Right ventricle myocardium inferior (tissue), 1 donor: ENCODE measurements at regions of chr11 and their contacts with region 1.

Region 1: DNA sequence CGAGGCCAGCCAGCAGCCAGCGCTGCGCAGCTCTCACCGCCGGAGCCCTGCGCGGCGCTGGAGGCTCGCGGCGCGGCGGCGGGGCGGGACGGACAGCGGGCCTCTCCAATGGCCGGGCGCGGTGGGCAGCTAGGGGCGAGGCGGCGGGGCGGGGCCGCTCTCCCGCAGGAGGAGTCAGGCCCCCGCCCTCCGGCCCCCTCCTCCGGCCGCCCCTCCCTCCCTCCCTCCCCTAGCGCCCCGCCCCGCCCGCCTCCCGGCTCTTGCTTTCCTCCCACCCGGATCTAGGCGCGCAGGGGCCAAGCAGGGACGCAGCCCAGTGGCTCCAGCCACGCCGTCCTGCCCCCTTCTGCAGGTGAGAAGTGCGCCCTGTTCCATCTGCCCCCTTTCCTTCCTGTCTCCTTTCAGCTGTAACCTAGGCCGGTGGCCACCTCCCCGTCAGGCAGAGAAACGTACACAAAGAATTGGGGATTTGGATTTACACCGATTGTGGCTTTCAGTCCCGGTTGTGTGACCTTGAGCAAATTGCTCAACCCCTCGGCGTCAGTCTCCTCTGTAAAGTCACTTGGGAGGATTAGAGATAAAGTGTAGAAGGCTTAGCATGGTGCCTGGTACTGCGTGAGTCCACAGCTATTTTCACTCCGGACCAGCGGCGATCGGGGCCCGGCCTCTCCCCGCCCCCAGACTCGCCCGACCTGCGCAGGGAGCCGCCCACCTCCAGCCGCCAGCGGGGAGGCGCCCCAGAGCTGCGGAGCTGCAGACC is at the start of gene FZD4:
- DNase-seq: peak; percentile 92
- ATAC-seq: peak; percentile 93
- total RNA-seq, gene FZD4: 31.3 TPM

Region 2: DNA sequence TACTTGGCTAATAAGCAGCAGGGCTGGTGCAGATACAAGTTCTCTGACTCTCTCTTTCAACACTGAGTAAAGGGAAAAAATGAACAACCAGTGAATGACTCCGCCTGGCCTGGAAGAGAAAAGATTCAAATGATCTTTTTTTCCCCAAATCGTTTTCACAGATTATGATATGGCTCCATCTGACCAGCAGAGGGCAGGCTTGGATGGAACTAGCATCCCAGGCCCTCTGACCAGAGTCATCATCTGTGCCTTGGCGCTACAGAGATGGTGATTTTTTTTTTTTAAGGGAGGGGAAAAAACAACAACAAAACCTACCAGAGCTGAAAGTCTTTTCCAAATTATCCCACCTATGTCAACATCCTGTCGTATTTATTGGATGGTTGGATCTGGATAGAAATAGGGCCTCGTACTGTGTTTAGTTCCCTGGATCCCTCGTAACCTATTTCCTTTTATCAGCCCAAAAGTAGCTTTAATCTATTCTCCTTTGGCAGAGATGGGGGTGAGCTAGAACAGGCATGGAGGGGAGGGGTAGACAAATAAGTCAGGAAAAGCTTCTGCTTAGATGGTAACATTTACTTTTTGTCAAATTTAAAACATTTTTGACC is 85.5 kb before region 1 on chr11:
- intact Hi-C with region 1: no loop called
- DNase-seq: no peak
- ATAC-seq: peak; percentile 83

Region 3: GRCh38 chr11:86888164-86889000 is 67.2 kb before region 1 on chr11:
- intact Hi-C with region 1: no loop called
- DNase-seq: no peak
- ATAC-seq: no peak

Region 4: GRCh38 chr11:86938900-86939880 is 16.4 kb before region 1 on chr11:
- intact Hi-C with region 1: loop called (anchors 2 kb)
- DNase-seq: no peak
- ATAC-seq: no peak

Region 5: DNA sequence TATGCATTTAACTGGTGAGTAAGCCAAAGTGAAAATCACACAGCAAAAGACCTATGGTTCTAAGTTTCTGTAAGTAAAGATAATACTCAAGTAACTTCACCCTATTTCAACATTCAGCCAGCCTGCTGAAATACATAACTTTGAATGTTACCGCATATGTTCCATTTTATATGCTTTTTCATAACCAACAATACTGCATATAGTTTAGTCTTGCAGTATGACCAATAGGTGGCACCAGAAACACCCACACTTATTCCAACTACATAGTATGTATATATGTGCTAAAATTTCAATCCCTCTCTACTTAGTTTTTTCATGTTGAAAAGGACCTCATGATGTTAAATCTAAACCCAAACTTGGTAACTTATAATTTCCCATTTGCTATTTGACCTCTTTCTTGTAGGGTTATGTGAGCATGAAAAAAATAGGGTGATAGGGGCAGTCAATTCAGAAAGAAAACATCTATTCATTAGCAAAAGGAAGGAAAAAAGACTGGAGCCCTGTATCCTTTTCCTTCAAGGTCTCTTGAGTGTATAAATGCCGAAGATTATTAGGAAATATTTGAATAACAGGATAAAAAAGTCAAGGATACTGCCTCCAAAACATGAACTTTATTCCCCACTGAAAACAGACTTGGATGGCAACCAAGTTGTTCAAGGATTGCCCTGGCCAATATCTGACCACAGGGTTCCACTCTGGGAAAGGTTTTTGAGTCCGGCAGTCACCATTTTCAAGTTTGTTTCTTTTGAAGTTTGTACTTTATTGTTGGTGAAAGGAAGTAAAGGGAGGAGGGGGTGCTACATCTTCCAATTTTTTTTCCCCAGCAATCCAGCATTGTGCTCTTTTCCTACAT is 23.4 kb after region 1 on chr11:
- intact Hi-C with region 1: loop called (anchors 2 kb)
- DNase-seq: no peak
- ATAC-seq: peak; percentile 44

Region 6: GRCh38 chr11:86990515-86990914 is 35.0 kb after region 1 on chr11:
- intact Hi-C with region 1: loop called (anchors 5 kb)
- DNase-seq: no peak
- ATAC-seq: no peak

Region 7: DNA sequence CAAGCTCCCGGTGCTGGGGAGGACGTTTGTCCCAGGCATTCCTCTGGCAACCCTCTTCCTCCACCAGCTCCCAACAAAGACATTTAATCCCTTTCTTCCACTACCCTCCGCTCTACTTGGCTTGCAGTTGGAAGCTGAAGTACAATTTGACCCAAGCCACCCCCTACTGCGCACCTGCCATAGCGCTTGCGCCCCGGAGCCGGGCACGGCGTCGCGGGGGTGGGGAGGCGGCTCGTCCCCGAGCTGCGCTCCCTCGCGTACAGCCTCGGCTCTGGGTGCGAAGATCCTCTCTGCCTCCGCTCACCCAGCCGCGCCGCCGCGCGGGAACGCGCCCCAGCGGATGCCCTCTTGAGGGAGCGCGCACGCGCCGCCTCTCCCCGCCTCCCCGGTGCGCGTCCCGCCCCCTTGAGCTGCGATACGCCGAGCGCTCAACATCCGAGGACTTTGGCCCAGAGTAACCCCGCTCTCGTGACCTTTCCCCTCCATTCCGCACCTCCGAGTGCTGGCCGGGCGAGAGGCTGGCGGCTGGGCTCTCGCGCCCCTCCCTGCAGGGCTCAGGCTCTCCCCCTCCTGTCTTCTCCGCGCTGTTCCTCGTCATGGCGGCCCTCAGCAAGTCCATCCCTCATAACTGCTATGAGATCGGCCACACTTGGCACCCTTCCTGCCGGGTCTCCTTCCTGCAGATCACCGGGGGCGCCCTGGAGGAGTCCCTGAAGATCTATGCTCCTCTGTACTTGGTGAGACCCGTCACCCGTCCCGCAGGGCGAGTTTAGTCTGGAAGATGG is 82.1 kb after region 1 on chr11 and contains the start of gene TMEM135:
- intact Hi-C with region 1: loop called (anchors 1 kb)
- DNase-seq: peak; percentile 96
- ATAC-seq: peak; percentile 99
- total RNA-seq, gene TMEM135: 18.1 TPM

Region 8: DNA sequence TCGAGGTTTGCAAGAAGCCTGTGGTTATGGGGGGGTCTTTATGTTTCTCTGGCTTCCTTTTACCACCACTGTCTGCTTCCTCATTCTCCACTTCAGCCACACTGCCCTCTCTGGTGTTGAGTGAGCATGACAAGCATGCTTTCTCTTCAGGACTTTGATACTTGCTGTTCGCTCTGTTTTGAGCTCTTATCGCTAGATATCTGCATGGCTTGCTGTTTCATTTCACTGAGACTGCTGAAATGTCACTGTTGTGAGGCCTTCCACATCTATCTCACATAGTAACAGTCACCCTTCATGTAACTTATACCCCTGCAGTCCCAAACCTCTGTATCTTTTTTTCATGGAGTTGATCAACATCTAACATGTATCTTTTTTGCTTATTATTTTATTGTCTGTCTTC is 142.0 kb after region 1 on chr11:
- intact Hi-C with region 1: loop called (anchors 10 kb)
- DNase-seq: no peak
- ATAC-seq: peak; percentile 77